ENCODE measurements at regions of chr17 and their contacts with region 1.

Region 1: GRCh38 chr17:60677308-60678124 is at the start of gene BCAS3:
- DNase-seq: peak; percentile 96 to 98 (median 97)
- H3K4me3 ChIP-seq: peak within 1 kb of the TSS; percentile 75 to 92 (median 79)
- H3K4me3 Mint-ChIP-seq: peak within 1 kb of the TSS; percentile 98
- H3K27ac ChIP-seq: peak within 1 kb of the TSS; percentile 37 to 86
- H3K27ac Mint-ChIP-seq: peak within 1 kb of the TSS; percentile 95 to 99 (median 97)
- H3K4me1 ChIP-seq: peaks cover 10 to 16% of the 10 kb centered on the region in 2 donors
- H3K4me1 Mint-ChIP-seq: peaks cover 15% of the 10 kb centered on the region
- H3K27me3 ChIP-seq: no peaks in the 10 kb centered on the region
- H3K27me3 Mint-ChIP-seq: peaks cover 0 to 4% (median 3%) of the 10 kb centered on the region in 3 donors
- CTCF ChIP-seq: no peak
- polyA plus RNA-seq, gene BCAS3: 10.3 to 19.1 (median 14.7) TPM

Region 2: DNA sequence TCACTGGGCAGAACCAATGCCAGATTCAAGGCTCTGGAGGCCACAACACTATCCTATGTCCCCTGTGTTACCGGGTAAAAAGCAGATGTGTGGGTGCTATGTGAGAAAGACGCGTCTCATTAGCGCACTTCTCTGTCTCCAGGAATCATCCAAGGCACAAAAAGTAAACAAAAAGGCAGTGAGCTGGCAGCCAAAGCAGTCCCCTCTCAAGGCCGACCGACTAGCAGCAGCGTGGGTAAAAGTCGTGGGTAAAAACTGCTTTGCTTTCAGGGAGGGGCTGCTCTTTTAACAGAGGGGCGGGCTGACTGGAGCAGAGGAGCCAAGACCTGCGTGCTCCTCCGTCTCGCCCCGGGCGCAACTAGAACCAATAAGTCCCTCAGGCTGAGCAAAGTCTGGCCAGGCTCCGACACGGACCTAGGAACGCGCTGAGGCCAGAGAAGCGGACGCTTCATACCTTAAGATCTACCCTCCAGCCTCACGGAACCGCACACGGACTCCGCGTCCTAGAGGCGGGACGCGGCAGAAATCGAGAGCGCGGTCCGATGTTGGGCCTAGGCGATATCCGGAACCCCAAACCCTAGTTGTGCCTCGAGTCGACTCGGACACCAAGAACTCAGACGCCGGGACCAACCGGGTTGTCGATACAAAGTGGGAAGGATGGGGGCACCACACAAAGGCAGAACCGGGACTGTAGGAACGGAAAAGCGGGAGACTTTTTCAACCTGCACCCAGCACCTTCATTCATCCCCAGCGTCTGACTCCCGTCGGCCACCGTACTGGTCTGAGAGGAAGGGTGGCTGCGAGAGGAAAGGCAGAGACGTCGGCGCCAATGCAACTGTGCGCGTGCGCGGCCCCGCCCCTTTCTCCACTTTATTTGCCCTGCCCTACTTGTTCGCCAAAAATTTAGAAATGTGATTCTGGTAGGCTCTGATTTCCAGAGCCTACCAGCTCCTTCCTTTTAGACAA is 1250.0 kb after region 1 on chr17 and contains the start of gene INTS2:
- intact Hi-C with region 1: loop called in 1 of 2 experiments (anchors 10 kb)
- DNase-seq: peak; percentile 90 to 93 (median 91)
- H3K4me3 ChIP-seq: peak within 1 kb of the TSS; percentile 67 to 92 (median 81)
- H3K4me3 Mint-ChIP-seq: peak within 1 kb of the TSS; percentile 90 to 95
- H3K27ac ChIP-seq: peak within 1 kb of the TSS; percentile 41 to 86
- H3K27ac Mint-ChIP-seq: peak within 1 kb of the TSS; percentile 88 to 96 (median 91)
- H3K4me1 ChIP-seq: peaks cover 15 to 20% of the 10 kb centered on the region in 2 donors
- H3K4me1 Mint-ChIP-seq: peaks cover 16% of the 10 kb centered on the region
- H3K27me3 ChIP-seq: no peaks in the 10 kb centered on the region
- H3K27me3 Mint-ChIP-seq: peaks cover 0 to 5% (median 1%) of the 10 kb centered on the region in 3 donors
- CTCF ChIP-seq: no peak
- polyA plus RNA-seq, gene INTS2: 2.2 to 2.9 (median 2.6) TPM

Measured in CD14-positive monocyte (primary cell).